Ascending aorta (tissue), 2 donors: ENCODE measurements at regions of chr18 and their contacts with region 1.

Region 1: DNA sequence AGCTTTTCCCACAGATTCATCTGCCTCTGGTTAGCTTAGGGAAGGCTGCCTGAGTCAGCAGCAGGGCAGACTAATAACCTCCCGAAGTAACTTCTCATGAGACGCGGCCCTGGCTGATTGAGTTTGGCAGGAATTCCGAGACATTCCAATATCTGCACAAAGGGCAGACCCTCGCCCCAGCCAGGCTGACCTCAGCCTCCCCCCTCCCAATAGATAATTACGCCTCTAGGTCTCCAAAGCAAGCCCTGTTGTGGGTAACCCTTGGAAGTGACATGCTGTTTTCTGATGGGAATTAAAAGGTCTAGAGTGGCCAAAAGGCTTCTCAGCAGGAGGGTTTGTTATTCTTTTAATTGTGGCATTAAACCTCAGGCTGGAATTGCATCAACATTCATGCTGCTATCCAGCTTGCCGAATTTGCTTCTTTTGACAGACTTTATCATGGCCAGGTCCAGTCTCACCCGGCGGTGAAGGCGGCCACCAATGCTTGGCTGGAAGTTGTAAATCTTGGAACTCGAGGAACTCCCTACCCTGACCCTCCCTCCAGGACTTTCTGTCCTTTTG is 98.0 kb upstream of the SLC14A2 start:
- DNase-seq: peak in 1 of 2 donors; percentile 88
- H3K4me3 ChIP-seq: peak overlapping the region in 1 of 2 donors; percentile 15
- H3K27ac ChIP-seq: peak overlapping the region; percentile 81 to 91
- H3K4me1 ChIP-seq: peaks cover 14 to 54% of the 10 kb centered on the region in 2 donors
- H3K27me3 ChIP-seq: no peaks in the 10 kb centered on the region
- CTCF ChIP-seq: no peak

Region 2: GRCh38 chr18:45324495-45325113 is 192.7 kb before region 1 on chr18:
- intact Hi-C with region 1: loop called (anchors 5 kb)
- DNase-seq: peak in 1 of 2 donors; percentile 83
- H3K4me3 ChIP-seq: no peak overlapping the region
- H3K27ac ChIP-seq: peak overlapping the region; percentile 10 to 23
- H3K4me1 ChIP-seq: peaks cover 6 to 8% of the 10 kb centered on the region in 2 donors
- H3K27me3 ChIP-seq: no peaks in the 10 kb centered on the region
- CTCF ChIP-seq: no peak

Region 3: GRCh38 chr18:45540125-45540524 is 22.9 kb after region 1 on chr18:
- intact Hi-C with region 1: no loop called
- DNase-seq: no peak
- H3K4me3 ChIP-seq: no peak overlapping the region
- H3K27ac ChIP-seq: peak overlapping the region; percentile 18 to 60
- H3K4me1 ChIP-seq: peaks cover 3 to 10% of the 10 kb centered on the region in 2 donors
- H3K27me3 ChIP-seq: no peaks in the 10 kb centered on the region
- CTCF ChIP-seq: no peak